Cardiac septum (tissue), 1 donor: ENCODE measurements at regions of chr13 and their contacts with region 1.

Region 1: DNA sequence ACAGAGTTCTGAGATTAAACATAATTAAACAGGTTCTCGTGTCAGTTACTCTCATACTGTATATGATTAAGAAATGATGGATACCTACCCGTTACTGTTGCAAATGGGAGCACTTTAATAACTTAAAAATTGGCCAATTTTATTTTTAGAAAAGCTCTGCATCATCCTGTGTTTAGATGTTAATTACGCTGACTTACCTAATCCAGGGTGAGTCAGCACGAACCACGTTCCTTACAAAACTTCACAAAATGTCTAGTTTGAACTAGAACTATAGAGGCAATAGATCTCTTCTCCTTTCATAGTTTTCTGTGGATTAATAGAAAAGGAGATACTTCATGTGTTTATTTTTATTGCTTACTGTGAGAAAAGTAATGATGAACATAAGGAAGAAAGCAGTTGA is 363.9 kb downstream of the MYO16 start:
- DNase-seq: no peak

Region 2: GRCh38 chr13:108947551-108948030 is 45.8 kb before region 1 on chr13:
- intact Hi-C with region 1: no loop called
- DNase-seq: no peak

Region 3: DNA sequence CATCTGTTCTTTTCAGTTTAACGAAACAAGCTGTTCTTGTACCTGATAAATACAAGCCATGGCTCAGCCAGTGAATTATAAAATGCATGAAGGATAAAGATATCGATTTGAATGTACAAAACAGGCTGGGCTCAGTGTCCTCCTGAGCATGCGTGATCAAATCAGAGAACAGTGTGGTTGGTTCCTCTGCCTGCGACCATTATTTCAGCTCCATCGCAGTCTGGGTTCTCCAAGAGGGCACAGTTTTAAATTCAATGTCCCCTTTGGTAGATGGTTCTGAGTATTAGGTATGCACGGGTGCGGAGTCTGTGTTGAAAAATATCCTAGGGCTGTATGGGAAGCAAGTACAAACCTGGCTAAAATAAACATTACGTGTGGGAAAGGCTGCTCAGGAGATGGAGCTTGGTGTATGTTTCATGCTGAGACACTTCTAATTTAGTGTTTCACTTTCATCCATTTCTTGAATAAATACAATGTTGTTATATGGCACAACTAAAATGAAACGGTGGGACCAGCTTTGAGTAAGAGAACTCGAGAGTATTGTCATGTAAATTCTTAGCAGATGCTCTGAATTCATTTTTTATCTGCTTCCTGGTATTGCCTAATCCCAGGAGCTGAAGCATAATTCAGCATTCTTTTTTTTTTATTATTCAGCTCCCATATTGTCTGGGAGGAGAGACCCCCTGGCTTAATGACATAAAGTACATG is 94.7 kb after region 1 on chr13:
- intact Hi-C with region 1: loop called (anchors 10 kb)
- DNase-seq: no peak